ENCODE measurements at regions of chr14 and their contacts with region 1.

Region 1: DNA sequence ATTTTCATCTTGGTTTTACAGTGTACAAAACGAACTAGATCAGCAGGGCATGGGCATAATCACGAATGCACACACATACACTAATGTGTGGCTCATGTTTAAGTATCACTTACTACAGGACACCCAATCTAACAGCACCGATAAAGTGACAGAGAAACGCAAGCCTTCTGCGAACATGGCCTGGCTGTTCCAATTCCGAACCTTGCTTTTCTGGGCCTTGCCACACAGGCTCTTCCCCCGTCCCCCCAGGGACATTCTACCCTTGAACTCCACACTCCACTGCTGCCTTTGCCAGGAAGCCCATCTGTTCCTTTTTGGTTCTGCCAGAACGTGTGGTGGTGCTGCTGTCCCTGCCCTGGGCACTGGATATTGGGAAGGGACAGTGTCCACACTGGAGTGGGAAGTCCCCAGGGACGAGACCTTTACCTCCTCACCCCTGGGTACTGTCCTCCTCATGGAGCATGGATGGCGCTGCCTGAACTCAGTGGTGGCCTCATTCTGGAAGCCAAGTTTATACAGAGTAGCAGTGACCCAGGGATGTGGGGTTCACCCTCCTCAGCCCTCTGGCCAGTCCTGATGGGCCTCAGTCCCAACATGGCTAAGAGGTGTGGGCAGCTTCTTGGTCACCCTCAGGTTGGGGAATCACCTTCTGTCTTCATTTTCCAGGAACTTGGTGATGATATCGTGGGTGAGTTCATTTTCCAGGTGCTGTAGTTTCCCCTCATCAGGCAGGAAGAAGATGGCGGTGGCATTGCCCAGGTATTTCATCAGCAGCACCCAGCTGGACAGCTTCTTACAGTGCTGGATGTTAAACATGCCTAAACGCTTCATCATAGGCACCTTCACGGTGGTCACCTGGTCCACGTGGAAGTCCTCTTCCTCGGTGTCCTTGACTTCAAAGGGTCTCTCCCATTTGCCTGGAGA is 7.9 kb downstream of the SERPINA1 start:
- DNase-seq: no peak
- H3K4me3 Mint-ChIP-seq: no peak overlapping the region
- H3K27ac Mint-ChIP-seq: no peak overlapping the region
- H3K4me1 Mint-ChIP-seq: peaks cover 7% of the 10 kb centered on the region
- H3K27me3 Mint-ChIP-seq: no peaks in the 10 kb centered on the region

Region 2: GRCh38 chr14:94364037-94364436 is 16.4 kb before region 1 on chr14:
- intact Hi-C with region 1: loop called (anchors 1 kb)
- DNase-seq: no peak
- H3K4me3 Mint-ChIP-seq: no peak overlapping the region
- H3K27ac Mint-ChIP-seq: no peak overlapping the region
- H3K4me1 Mint-ChIP-seq: no peaks in the 10 kb centered on the region
- H3K27me3 Mint-ChIP-seq: no peaks in the 10 kb centered on the region

Region 3: GRCh38 chr14:94517641-94518257 is 137.3 kb after region 1 on chr14:
- intact Hi-C with region 1: no loop called
- DNase-seq: no peak
- H3K4me3 Mint-ChIP-seq: no peak overlapping the region
- H3K27ac Mint-ChIP-seq: no peak overlapping the region
- H3K4me1 Mint-ChIP-seq: no peaks in the 10 kb centered on the region
- H3K27me3 Mint-ChIP-seq: no peaks in the 10 kb centered on the region